ENCODE measurements at regions of chr1 and their contacts with region 1.

Region 1: GRCh38 chr1:1179926-1180861 is 6.5 kb downstream of the TTLL10 start:
- DNase-seq: no peak
- H3K4me3 ChIP-seq: no peak overlapping the region
- H3K27ac ChIP-seq: no peak overlapping the region
- H3K4me1 ChIP-seq: peaks cover 0 to 4% (median 0%) of the 10 kb centered on the region in 4 donors
- H3K27me3 ChIP-seq: peaks cover 0 to 80% of the 10 kb centered on the region in 2 donors
- CTCF ChIP-seq: no peak

Region 2: DNA sequence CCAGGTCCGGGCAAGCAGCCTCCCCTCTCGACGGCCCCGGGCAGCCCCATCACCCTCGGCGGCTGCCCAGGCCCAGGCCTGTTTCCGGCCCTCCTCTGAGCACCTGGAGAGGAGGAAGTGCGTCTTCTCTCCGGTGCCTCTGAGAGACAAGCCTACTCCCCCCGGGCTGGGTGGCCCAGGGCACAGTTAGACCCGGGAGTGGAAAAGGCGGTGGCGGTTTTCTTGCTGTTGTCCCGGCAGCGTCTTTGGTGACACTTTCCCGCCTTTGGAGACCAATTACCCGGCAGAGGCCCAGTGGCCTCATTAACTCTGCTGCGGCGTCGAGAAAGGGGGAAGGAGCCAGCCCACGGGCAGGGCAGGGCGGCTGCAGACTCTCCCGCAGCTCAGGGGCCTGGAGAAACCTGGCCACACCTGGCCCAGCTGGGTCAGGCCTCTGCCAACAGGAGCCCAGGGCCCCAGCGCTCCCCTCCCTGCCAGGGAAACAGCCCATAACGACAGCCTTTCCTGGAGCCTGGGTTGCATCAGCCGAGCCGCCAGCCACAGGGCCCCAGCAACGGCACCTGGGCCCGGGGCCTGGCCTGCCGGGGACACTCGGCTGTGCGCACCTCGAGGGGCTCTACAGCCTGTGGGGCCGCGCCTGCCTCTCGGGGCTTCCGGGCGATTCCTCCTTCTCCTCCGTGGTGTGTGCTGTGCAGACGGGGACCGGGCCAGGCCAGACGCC is 35.9 kb before region 1 on chr1:
- intact Hi-C with region 1: loop called (anchors 5 kb)
- DNase-seq: no peak
- H3K4me3 ChIP-seq: no peak overlapping the region
- H3K27ac ChIP-seq: no peak overlapping the region
- H3K4me1 ChIP-seq: no peaks in the 10 kb centered on the region
- H3K27me3 ChIP-seq: peaks cover 0 to 62% of the 10 kb centered on the region in 2 donors
- CTCF ChIP-seq: no peak

Region 3: DNA sequence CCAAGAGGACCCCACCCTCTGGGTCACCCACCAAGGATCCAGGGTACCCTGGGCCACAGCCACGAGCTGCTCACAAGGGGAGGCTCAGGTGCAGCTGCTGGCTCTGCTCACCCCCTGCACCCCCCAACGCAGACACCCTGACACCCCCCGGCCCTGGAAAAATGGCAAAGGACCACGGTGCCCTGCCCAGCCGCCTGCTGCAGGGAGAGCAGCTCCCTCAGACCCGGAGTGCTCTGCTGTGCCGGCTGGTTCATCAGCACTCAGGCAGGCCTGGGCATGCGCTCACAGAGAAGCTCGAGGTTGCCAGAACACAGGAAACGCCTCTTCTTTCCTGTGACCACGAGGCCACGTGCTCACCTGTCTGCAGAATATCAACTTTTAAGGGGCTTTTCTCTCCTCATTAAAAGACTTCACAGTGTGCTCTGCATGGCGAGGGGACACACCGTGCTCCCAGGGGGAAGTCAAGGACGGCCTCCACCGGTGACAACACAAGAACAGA is 70.6 kb after region 1 on chr1:
- intact Hi-C with region 1: no loop called
- DNase-seq: no peak
- H3K4me3 ChIP-seq: no peak overlapping the region
- H3K27ac ChIP-seq: no peak overlapping the region
- H3K4me1 ChIP-seq: peaks cover 0 to 17% (median 5%) of the 10 kb centered on the region in 4 donors
- H3K27me3 ChIP-seq: peaks cover 0 to 28% of the 10 kb centered on the region in 2 donors
- CTCF ChIP-seq: no peak

Measured in tibial artery (tissue), 4 donors.